Breast epithelium (tissue), 4 donors: ENCODE measurements at regions of chr5 and their contacts with region 1.

Region 1: GRCh38 chr5:40928886-40929448 is 19.7 kb downstream of the C7 start:
- DNase-seq: no peak
- H3K4me3 ChIP-seq: no peak overlapping the region
- H3K27ac ChIP-seq: no peak overlapping the region
- H3K4me1 ChIP-seq: no peaks in the 10 kb centered on the region
- H3K27me3 ChIP-seq: no peaks in the 10 kb centered on the region
- CTCF ChIP-seq: no peak
- POLR2A ChIP-seq: no peak

Region 2: GRCh38 chr5:40962208-40962955 is 33.4 kb after region 1 on chr5:
- intact Hi-C with region 1: loop called (anchors 1 kb)
- DNase-seq: no peak
- H3K4me3 ChIP-seq: no peak overlapping the region
- H3K27ac ChIP-seq: no peak overlapping the region
- H3K4me1 ChIP-seq: no peaks in the 10 kb centered on the region
- H3K27me3 ChIP-seq: no peaks in the 10 kb centered on the region
- CTCF ChIP-seq: no peak
- POLR2A ChIP-seq: no peak